ENCODE measurements at regions of chr12 and their contacts with region 1.

Region 1: DNA sequence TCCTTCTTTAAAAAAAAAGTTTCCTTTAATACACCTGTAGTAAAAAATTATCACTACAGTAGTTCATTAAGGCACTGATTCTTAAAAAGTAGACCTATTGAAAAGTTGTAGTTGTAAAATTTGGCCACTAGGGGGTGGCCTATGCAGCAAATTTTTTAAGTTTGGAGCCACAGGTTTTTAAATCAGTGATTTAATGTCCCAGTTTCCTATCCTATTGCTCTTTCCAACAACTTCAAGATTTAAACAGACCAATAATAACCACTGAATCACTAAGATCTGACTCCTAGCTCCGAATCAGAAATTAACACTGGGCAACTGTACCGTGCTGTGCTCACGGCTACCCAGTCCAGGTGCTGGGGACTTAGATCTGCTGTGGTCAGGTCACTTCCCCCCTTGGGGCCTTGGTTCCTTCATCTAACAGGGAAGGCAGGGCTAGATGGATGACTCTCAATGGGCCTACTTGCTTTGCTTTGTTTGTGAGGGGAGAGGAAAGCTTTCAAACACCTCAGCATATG is 279.3 kb downstream of the MED13L start:
- DNase-seq: peak; percentile 24
- ATAC-seq: no peak
- H3K4me3 ChIP-seq: no peak overlapping the region
- H3K27ac ChIP-seq: no peak overlapping the region
- H3K4me1 ChIP-seq: no peaks in the 10 kb centered on the region
- H3K27me3 ChIP-seq: no peaks in the 10 kb centered on the region
- CTCF ChIP-seq: peak; percentile 52; the same call in 1 of the 2 replicates
- EP300 ChIP-seq: no peak
- POLR2A ChIP-seq: no peak
- RAD21 ChIP-seq: 0 out of 2 replicates have a peak, but pooled peaks have one; percentile 9

Region 2: DNA sequence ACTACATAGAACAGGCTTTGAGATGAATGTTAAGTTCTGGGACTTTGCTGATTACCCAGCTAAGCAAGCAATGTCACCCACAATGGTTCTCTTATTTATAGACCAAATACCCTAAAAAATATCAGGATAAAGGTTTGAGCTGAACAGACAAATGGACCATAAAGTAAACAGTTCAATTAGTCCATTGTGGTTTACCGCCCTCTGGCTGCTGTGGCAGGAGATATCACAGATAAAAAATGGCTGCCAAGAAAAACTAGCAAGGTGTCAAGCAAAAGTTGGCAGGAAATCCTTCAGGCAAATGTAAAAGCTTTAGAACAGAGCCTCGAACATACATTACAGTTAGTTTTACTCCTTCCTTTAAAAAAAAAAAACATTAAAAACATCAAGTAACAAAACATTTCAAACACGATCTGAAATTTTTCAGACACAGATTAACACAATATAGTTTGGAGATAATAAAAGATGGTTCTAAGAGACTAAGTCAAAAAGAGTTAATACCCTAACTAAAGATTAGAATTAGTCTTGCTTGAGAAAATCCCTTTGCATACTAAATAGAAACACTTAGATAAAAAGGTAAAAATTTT is 238.1 kb after region 1 on chr12:
- CTCF ChIA-PET with region 1: interaction called, 13 read pairs
- POLR2A ChIA-PET with region 1: no interaction called
- in situ Hi-C with region 1: loop called (anchors 10 kb)
- intact Hi-C with region 1: loop called (anchors 5 kb)
- DNase-seq: peak; percentile 43
- ATAC-seq: peak; percentile 49; the same call in 1 of the 3 replicates
- H3K4me3 ChIP-seq: no peak overlapping the region
- H3K27ac ChIP-seq: no peak overlapping the region
- H3K4me1 ChIP-seq: peaks cover 8% of the 10 kb centered on the region
- H3K27me3 ChIP-seq: no peaks in the 10 kb centered on the region
- CTCF ChIP-seq: peak; percentile 77
- EP300 ChIP-seq: no peak
- POLR2A ChIP-seq: no peak
- RAD21 ChIP-seq: peak; percentile 43; the same call in 1 of the 2 replicates

Region 3: DNA sequence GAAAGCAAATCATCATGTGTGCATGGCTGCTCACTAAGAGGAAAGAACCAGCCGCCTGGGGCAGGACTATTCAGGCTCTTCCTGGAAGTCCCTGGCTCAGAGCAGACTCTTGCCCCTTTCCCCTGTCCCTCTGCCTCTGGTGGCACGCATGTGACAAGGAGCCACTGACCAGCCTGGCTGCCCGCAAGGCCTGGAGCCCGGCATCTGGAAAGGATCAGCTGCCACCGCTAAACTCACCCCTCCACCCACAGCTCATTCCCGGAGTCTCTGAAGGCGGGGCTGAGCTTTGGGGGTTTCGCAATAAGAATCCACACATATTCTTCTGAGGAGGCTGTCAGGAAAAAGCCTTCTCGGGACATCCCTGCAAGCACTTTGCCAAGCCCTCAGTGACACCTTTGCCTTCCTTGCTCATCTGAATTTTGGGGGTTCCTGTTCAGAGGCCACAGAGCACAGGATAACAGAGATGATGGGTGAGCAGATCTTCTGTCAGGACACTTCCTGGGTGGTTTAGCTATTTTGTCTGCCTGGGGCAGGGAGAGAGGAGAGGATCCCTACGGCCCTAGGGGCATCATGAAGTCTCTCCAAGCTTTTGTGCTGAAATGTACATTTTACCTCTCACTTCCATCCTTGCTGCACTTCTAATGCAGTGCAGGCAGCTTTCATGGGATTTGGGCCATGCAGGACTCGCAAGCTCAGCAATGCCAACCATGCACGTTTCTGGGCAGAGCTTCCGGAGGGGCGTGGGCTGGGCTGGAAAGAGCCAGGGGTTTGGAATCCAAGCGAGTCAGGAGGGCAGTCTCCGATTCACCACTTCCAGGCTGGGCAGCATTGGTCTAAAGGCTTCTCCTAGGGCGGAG is 436.2 kb after region 1 on chr12:
- CTCF ChIA-PET with region 1: no interaction called
- POLR2A ChIA-PET with region 1: no interaction called
- in situ Hi-C with region 1: no loop called
- intact Hi-C with region 1: loop called (anchors 10 kb)
- DNase-seq: no peak
- ATAC-seq: peak; percentile 29
- H3K4me3 ChIP-seq: no peak overlapping the region; a peak in 1 of 6 replicates
- H3K27ac ChIP-seq: no peak overlapping the region
- H3K4me1 ChIP-seq: peaks cover 46% of the 10 kb centered on the region
- H3K27me3 ChIP-seq: peaks cover 0 to 1% of the 10 kb centered on the region in 2 experiments; a peak in 2 of 5 replicates
- CTCF ChIP-seq: no peak
- EP300 ChIP-seq: no peak
- POLR2A ChIP-seq: no peak
- RAD21 ChIP-seq: no peak

Region 4: DNA sequence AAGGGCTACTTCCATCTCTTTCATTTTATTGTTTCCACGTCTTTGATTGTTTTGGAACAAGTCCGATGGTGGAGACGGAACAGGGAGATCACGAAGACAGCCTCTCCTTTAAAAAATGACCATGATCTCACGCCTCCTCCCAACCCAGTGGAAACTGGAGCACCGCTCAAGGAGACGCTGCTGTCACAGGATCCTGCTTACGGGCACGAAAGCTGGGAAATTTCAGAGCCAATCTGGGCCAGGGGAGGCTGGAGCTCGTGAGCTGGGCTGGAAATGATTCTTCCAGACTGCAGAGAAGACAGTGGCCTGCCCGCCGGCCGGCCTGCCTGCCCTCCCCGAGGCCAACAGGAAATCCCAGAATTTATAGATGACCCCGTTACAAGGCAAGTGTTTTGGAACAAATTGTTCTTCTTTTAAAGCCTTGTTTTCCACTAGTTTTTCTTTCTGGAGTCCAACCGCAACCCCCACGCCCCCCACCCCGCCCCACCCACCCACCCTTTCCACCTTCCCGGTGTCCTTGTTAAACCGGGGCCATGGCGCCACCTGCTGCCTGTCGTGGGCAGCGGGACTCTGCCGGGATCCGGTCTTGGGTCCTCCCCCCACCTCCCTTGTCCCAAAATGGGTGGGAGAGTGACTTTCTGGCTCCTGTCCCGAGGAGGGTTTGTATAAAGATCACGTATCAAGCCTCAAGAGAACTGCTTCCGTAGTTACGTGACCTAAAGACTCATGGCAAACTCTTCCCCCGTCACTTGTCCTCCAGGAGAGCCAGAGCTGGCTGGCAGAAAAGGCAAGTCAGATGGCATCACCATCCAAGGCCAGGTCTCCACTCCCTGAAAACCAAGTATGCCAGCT is 601.3 kb after region 1 on chr12:
- CTCF ChIA-PET with region 1: no interaction called
- POLR2A ChIA-PET with region 1: no interaction called
- in situ Hi-C with region 1: loop called (anchors 10 kb)
- intact Hi-C with region 1: no loop called
- DNase-seq: peak; percentile 22
- ATAC-seq: peak; percentile 85
- H3K4me3 ChIP-seq: peak overlapping the region in 1 of 3 experiments; percentile 34; a peak in 1 of 6 replicates
- H3K27ac ChIP-seq: no peak overlapping the region
- H3K4me1 ChIP-seq: peaks cover 21% of the 10 kb centered on the region
- H3K27me3 ChIP-seq: peaks cover 0 to 5% of the 10 kb centered on the region in 2 experiments; a peak in 1 of 5 replicates
- CTCF ChIP-seq: peak; percentile 70
- EP300 ChIP-seq: no peak
- POLR2A ChIP-seq: no peak
- RAD21 ChIP-seq: 0 out of 2 replicates have a peak, but pooled peaks have one; percentile 16

Region 5: DNA sequence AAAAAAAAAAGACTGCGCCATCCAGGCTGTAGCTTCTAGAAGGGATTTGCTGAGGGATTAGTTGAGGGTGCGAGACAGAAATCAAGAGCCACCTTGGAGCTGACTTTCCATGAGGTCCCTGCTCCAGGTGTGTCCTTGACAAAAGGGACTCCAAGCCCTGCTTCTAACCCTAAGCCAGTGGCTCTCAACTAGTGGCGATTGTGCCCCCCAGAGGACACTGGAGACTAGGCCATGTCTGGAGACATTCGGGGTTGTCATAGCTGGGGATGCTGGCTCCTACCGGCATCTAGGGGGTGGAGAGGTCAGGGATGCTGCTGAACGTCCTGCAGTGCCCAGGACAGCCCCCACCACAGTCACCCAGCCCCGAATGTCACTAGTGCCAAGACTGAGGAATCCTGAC is 699.1 kb after region 1 on chr12:
- CTCF ChIA-PET with region 1: no interaction called
- POLR2A ChIA-PET with region 1: no interaction called
- in situ Hi-C with region 1: no loop called
- intact Hi-C with region 1: loop called (anchors 10 kb)
- DNase-seq: peak; percentile 57
- ATAC-seq: peak; percentile 87
- H3K4me3 ChIP-seq: no peak overlapping the region
- H3K27ac ChIP-seq: no peak overlapping the region
- H3K4me1 ChIP-seq: peaks cover 17% of the 10 kb centered on the region
- H3K27me3 ChIP-seq: peaks cover 3 to 26% of the 10 kb centered on the region in 2 experiments; a peak in 4 of 5 replicates
- CTCF ChIP-seq: peak; percentile 72
- EP300 ChIP-seq: no peak
- POLR2A ChIP-seq: no peak
- RAD21 ChIP-seq: 0 out of 2 replicates have a peak, but pooled peaks have one; percentile 23